Activated T-helper 2 cell treated with anti-CD3 and anti-CD28 coated beads, Interferon-gamma antibody, Interleukin-2, Interleukin-4, amounts not matched to agents 10 μg/mL and 5 μg/mL and 100 μg/mL, durations not matched to agents 14 hours and 24 hours and 36 hours (primary cell): ENCODE measurements at regions of chr15 and their contacts with region 1.

Region 1: GRCh38 chr15:75801859-75802593 is 41.2 kb upstream of the UBE2Q2 start:
- DNase-seq: peak; percentile 71
- H3K4me3 Mint-ChIP-seq: peak overlapping the region; percentile 52
- H3K27ac Mint-ChIP-seq: no peak overlapping the region
- H3K4me1 Mint-ChIP-seq: peaks cover 8% of the 10 kb centered on the region
- H3K27me3 Mint-ChIP-seq: peaks cover 64% of the 10 kb centered on the region

Region 2: GRCh38 chr15:75684642-75685041 is 117.4 kb before region 1 on chr15:
- intact Hi-C with region 1: loop called (anchors 1 kb)
- DNase-seq: no peak
- H3K4me3 Mint-ChIP-seq: no peak overlapping the region
- H3K27ac Mint-ChIP-seq: no peak overlapping the region
- H3K4me1 Mint-ChIP-seq: no peaks in the 10 kb centered on the region
- H3K27me3 Mint-ChIP-seq: no peaks in the 10 kb centered on the region

Region 3: DNA sequence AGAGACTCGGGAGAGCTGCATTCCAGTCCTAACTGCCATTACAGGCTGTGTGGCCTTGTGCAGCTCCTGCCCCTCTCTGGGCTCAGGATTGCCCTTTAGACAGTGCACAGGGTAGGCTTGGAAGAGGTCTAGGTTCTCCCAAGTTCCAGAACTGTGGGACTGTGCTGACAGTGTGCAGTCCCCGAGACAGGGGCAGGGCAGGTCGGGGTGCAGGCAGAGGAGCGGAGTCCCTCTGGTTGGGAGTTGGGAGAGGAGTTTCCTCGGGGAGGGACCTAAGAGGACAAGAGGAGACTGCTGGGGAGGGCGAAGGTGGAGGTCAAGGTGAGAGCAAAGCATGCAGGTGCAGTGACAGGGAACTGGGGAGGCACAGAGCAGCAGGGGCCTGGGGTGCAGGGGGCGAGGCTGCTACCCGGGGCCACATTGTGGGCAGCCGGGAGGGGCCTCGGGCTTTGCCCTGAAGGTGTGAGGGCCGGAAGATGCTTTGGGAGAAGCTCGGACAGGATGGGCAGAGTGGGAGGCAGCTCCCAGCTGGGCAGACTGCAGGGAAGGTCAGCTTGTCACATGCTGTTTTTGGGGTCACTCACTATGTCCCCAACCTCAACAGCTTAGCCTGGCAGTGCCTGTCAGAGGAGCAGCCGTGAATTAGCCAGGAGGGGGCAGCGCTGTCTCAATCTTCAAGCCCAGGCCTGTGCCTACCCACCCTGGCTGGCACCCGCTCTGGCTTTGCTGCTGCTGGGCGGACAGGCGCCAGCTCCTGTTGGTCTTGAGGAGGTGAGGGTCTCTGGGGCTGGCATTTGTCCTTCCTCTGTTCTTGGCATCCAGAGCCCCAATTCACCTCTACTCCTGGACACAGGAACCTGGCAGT is 73.9 kb before region 1 on chr15:
- intact Hi-C with region 1: loop called (anchors 1 kb)
- DNase-seq: peak; percentile 43
- H3K4me3 Mint-ChIP-seq: no peak overlapping the region
- H3K27ac Mint-ChIP-seq: no peak overlapping the region
- H3K4me1 Mint-ChIP-seq: peaks cover 2% of the 10 kb centered on the region
- H3K27me3 Mint-ChIP-seq: peaks cover 18% of the 10 kb centered on the region